H1 (cell line): ENCODE measurements at regions of chr20 and their contacts with region 1.

Region 1: DNA sequence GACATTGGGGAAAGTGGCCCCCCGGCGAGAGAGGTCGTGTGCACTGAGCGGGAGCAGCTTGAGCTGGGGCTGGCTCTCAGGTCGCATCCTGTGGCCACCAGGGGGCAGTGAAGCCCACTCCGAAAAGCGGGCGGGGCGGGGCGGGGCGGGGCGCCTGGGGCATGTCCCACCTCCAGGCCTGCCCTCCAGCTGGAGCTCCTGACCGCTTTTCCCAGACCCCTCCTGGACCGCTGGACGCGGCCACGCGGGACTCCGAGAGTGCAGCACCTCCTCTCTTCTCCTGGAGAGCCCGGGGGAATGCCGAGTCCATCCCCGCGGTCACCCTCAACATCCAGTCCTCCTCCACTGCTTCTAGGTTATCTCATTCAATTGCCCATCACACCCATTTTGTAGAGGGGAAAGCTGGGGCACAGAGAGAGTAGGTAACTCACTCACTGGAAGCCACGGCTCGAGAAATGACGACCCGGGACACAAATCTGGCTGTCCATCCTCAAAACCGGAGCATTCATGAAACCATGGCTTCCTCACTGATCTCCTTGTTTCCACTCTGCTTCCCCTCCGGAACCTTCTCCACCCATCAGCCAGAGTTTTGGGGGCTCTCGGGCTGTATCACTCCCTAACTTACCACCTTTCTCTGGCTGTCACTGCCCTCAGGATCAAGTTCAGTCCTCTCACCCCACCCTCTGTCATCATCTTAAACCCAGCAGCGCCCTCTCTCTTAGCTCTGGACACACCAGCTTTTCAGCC is 24.1 kb downstream of the COX4I2 start:
- DNase-seq: peak; percentile 23 to 88
- H3K4me3 ChIP-seq: peak overlapping the region; percentile 11 to 62 (median 48); a peak in 7 of 8 replicates
- H3K27ac ChIP-seq: no peak overlapping the region
- H3K4me1 ChIP-seq: peaks cover 0 to 7% (median 5%) of the 10 kb centered on the region in 4 experiments; a peak in 5 of 7 replicates
- H3K27me3 ChIP-seq: no peaks in the 10 kb centered on the region
- CTCF ChIP-seq: peak; percentile 79 to 92 (median 86)
- EP300 ChIP-seq: no peak
- POLR2A ChIP-seq: peak in 1 of 2 experiments; percentile 58; a peak in 2 of 3 replicates
- RAD21 ChIP-seq: peak; percentile 67 to 79

Region 2: GRCh38 chr20:31638317-31638716 is 23.5 kb before region 1 on chr20:
- CTCF ChIA-PET with region 1: interaction called, 57 read pairs
- POLR2A ChIA-PET with region 1: interaction called, 5 read pairs
- DNase-seq: no peak
- H3K4me3 ChIP-seq: no peak overlapping the region
- H3K27ac ChIP-seq: no peak overlapping the region
- H3K4me1 ChIP-seq: peaks cover 0 to 2% (median 0%) of the 10 kb centered on the region in 4 experiments; a peak in 2 of 7 replicates
- H3K27me3 ChIP-seq: no peaks in the 10 kb centered on the region
- CTCF ChIP-seq: no peak
- EP300 ChIP-seq: no peak
- POLR2A ChIP-seq: no peak
- RAD21 ChIP-seq: no peak

Region 3: GRCh38 chr20:31684153-31685015 is 22.6 kb after region 1 on chr20:
- CTCF ChIA-PET with region 1: interaction called, 49 read pairs
- POLR2A ChIA-PET with region 1: interaction called, 4 read pairs
- DNase-seq: no peak
- H3K4me3 ChIP-seq: no peak overlapping the region
- H3K27ac ChIP-seq: no peak overlapping the region
- H3K4me1 ChIP-seq: peaks cover 0 to 3% (median 1%) of the 10 kb centered on the region in 4 experiments; a peak in 1 of 7 replicates
- H3K27me3 ChIP-seq: no peaks in the 10 kb centered on the region
- CTCF ChIP-seq: no peak
- EP300 ChIP-seq: no peak
- POLR2A ChIP-seq: no peak
- RAD21 ChIP-seq: no peak

Region 4: GRCh38 chr20:31698803-31699718 is 37.3 kb after region 1 on chr20:
- CTCF ChIA-PET with region 1: interaction called, 49 read pairs
- POLR2A ChIA-PET with region 1: interaction called, 3 read pairs
- DNase-seq: no peak
- H3K4me3 ChIP-seq: no peak overlapping the region
- H3K27ac ChIP-seq: no peak overlapping the region
- H3K4me1 ChIP-seq: peaks cover 9 to 15% (median 10%) of the 10 kb centered on the region in 4 experiments
- H3K27me3 ChIP-seq: no peaks in the 10 kb centered on the region
- CTCF ChIP-seq: no peak
- EP300 ChIP-seq: no peak
- POLR2A ChIP-seq: no peak
- RAD21 ChIP-seq: no peak

Region 5: GRCh38 chr20:31712564-31713311 is 50.9 kb after region 1 on chr20:
- CTCF ChIA-PET with region 1: interaction called, 151 read pairs
- POLR2A ChIA-PET with region 1: interaction called, 108 read pairs
- DNase-seq: peak; percentile 55 to 86
- H3K4me3 ChIP-seq: peak overlapping the region in 3 of 4 experiments; percentile 17 to 43 (median 30); a peak in 4 of 8 replicates
- H3K27ac ChIP-seq: peak overlapping the region; percentile 31
- H3K4me1 ChIP-seq: peaks cover 27 to 44% (median 36%) of the 10 kb centered on the region in 4 experiments
- H3K27me3 ChIP-seq: no peaks in the 10 kb centered on the region
- CTCF ChIP-seq: no peak
- EP300 ChIP-seq: peak in 1 of 2 experiments; percentile 87; a peak in 1 of 3 replicates
- POLR2A ChIP-seq: no peak; a peak in 1 of 3 replicates
- RAD21 ChIP-seq: no peak; a peak in 1 of 4 replicates